ENCODE measurements at regions of chr9 and their contacts with region 1.

Region 1: DNA sequence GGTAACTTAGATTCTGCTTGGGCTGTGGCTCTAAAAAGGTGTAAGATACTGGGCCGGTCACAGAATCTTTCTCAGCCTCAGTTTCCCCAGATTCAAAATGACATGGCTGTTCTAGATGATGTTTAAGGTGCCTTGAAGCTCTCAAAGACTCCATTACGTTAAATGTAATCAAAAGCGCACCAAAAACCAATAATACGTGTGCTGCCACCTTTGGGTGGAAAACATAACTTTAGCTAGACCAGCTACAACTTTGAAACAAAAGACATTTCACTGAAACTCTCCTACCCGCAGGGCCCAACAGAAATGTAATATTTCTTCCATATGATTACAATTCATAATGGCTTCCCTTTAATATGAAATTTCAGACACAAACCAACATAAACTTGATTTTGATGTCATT is 35.0 kb upstream of the PCSK5 start:
- DNase-seq: peak in 2 of 5 donors; percentile 10 to 35
- H3K4me3 ChIP-seq: no peak overlapping the region
- H3K27ac ChIP-seq: no peak overlapping the region
- H3K4me1 ChIP-seq: no peaks in the 10 kb centered on the region
- H3K27me3 ChIP-seq: no peaks in the 10 kb centered on the region
- CTCF ChIP-seq: peak in 2 of 3 donors; percentile 53 to 61
- EP300 ChIP-seq: no peak
- POLR2A ChIP-seq: no peak

Region 2: GRCh38 chr9:75274781-75275180 is 580.7 kb before region 1 on chr9:
- intact Hi-C with region 1: loop called in 2 of 4 experiments (anchors 10 kb)
- DNase-seq: no peak
- H3K4me3 ChIP-seq: no peak overlapping the region
- H3K27ac ChIP-seq: no peak overlapping the region
- H3K4me1 ChIP-seq: no peaks in the 10 kb centered on the region
- H3K27me3 ChIP-seq: no peaks in the 10 kb centered on the region
- CTCF ChIP-seq: no peak
- EP300 ChIP-seq: no peak
- POLR2A ChIP-seq: no peak

Region 3: DNA sequence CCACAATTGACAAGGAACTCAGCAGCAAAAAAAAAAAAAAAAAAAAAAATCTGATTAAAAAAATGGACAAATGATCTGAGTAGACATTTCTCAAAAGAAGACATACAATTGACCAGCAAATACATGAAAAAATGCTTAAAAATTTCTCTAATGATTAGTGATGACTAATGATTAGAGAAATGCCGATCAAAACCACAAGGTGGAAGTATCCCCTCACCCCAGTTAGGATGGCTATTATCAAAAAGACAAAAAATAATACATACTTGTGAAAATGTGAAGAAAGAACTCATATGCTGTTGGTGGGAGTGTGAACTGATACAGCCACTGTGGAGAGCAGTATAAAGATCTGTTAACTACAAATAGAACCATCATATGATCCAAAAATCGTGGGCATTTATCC is 521.9 kb before region 1 on chr9:
- intact Hi-C with region 1: loop called in 2 of 4 experiments (anchors 10 kb)
- DNase-seq: no peak
- H3K4me3 ChIP-seq: no peak overlapping the region
- H3K27ac ChIP-seq: no peak overlapping the region
- H3K4me1 ChIP-seq: no peaks in the 10 kb centered on the region
- H3K27me3 ChIP-seq: no peaks in the 10 kb centered on the region
- CTCF ChIP-seq: peak in 2 of 3 donors; percentile 58 to 61
- EP300 ChIP-seq: no peak
- POLR2A ChIP-seq: no peak

Region 4: DNA sequence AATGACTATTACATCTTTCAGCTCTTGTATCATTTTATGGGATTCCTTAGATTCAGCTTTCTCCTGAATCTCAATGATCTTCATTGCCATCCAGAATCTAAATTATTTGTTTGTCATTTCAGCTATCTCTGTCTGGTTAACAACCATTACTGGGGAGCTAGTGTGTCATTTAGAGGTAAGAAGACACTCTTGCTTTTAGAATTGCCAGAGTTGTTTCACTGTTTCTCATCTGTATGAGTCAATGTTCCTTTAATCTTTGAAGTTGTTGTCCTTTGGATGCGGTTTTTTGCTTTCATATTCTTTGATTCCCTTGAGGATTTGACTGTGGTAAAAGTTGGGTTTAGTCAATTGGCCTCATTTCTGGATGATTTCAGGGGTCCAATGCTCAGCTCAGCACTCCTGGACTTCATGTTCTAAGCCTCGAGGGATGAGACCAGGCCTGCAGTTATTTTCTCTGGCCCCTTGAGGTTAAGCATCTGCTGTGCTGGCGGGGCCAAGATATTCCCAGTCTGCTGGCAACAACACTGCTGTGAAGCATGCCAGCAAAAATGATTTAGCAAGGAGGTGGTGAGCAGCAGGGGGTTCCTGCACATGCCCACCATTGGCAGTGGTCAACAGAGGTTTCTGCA is 67.4 kb before region 1 on chr9:
- intact Hi-C with region 1: no loop called
- DNase-seq: peak; percentile 25 to 75 (median 53)
- H3K4me3 ChIP-seq: no peak overlapping the region
- H3K27ac ChIP-seq: peak overlapping the region in 1 of 2 donors; percentile 58
- H3K4me1 ChIP-seq: peaks cover 4% of the 10 kb centered on the region
- H3K27me3 ChIP-seq: no peaks in the 10 kb centered on the region
- CTCF ChIP-seq: no peak
- EP300 ChIP-seq: no peak
- POLR2A ChIP-seq: no peak

Region 5: DNA sequence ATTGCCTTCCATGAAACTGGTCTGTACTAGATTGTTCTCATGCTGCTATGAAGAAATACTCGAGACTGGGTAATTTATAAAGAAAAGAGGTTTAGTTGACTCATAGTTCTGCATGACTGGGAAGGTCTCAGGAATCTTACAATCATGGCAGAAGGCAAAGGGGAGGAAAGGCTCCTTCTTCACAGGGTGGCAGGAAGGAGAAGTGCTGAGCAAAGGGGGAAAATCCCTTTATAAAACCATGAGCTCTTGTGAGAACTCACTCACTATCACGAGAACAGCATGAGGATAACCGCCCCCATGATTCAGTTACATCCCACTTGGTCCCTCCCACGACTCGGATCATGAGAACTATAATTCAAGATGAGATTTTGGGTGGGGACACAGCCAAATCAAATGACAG is 375.5 kb after region 1 on chr9:
- intact Hi-C with region 1: no loop called
- DNase-seq: no peak
- H3K4me3 ChIP-seq: no peak overlapping the region
- H3K27ac ChIP-seq: no peak overlapping the region
- H3K4me1 ChIP-seq: no peaks in the 10 kb centered on the region
- H3K27me3 ChIP-seq: no peaks in the 10 kb centered on the region
- CTCF ChIP-seq: no peak
- EP300 ChIP-seq: no peak
- POLR2A ChIP-seq: no peak

Region 6: DNA sequence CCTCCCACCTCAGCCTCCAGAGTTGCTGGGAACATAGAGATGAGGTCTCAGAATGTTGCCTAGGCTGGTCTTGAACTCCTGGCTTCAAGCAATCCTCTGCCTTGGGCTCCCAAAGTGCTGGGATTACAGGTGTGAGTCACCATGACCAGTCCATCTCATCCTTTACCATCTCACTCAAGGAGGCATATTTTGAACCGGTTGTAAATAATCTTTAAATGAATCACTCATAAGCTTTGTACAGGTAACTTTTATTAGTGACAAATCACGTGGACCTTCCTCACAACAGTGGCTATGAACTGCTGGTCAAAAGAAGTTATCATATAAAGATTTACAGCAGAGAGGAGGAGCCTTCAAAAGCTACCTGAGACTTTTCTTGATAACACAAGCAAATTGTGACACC is 468.0 kb after region 1 on chr9:
- intact Hi-C with region 1: no loop called
- DNase-seq: no peak
- H3K4me3 ChIP-seq: no peak overlapping the region
- H3K27ac ChIP-seq: no peak overlapping the region
- H3K4me1 ChIP-seq: no peaks in the 10 kb centered on the region
- H3K27me3 ChIP-seq: no peaks in the 10 kb centered on the region
- CTCF ChIP-seq: no peak
- EP300 ChIP-seq: no peak
- POLR2A ChIP-seq: no peak